ENCODE measurements at regions of chr3 and their contacts with region 1.

Region 1: GRCh38 chr3:126911162-126912026 is 71.5 kb upstream of the PLXNA1 start:
- DNase-seq: peak; percentile 99
- H3K4me3 ChIP-seq: no peak overlapping the region
- H3K27ac ChIP-seq: peak overlapping the region; percentile 78
- H3K4me1 ChIP-seq: peaks cover 48% of the 10 kb centered on the region
- H3K27me3 ChIP-seq: no peaks in the 10 kb centered on the region
- CTCF ChIP-seq: no peak

Region 2: GRCh38 chr3:126508539-126508938 is 402.9 kb before region 1 on chr3:
- CTCF ChIA-PET with region 1: no interaction called
- dilution Hi-C with region 1: loop called (anchors 10 kb)
- in situ Hi-C with region 1: no loop called
- intact Hi-C with region 1: no loop called
- DNase-seq: no peak
- H3K4me3 ChIP-seq: no peak overlapping the region
- H3K27ac ChIP-seq: no peak overlapping the region
- H3K4me1 ChIP-seq: peaks cover 18% of the 10 kb centered on the region
- H3K27me3 ChIP-seq: no peaks in the 10 kb centered on the region
- CTCF ChIP-seq: no peak

Region 3: GRCh38 chr3:126858887-126859286 is 52.5 kb before region 1 on chr3:
- CTCF ChIA-PET with region 1: no interaction called
- dilution Hi-C with region 1: no loop called
- in situ Hi-C with region 1: no loop called
- intact Hi-C with region 1: loop called (anchors 2 kb)
- DNase-seq: peak; percentile 97
- H3K4me3 ChIP-seq: no peak overlapping the region
- H3K27ac ChIP-seq: peak overlapping the region; percentile 36
- H3K4me1 ChIP-seq: peaks cover 20% of the 10 kb centered on the region
- H3K27me3 ChIP-seq: no peaks in the 10 kb centered on the region
- CTCF ChIP-seq: no peak

Region 4: DNA sequence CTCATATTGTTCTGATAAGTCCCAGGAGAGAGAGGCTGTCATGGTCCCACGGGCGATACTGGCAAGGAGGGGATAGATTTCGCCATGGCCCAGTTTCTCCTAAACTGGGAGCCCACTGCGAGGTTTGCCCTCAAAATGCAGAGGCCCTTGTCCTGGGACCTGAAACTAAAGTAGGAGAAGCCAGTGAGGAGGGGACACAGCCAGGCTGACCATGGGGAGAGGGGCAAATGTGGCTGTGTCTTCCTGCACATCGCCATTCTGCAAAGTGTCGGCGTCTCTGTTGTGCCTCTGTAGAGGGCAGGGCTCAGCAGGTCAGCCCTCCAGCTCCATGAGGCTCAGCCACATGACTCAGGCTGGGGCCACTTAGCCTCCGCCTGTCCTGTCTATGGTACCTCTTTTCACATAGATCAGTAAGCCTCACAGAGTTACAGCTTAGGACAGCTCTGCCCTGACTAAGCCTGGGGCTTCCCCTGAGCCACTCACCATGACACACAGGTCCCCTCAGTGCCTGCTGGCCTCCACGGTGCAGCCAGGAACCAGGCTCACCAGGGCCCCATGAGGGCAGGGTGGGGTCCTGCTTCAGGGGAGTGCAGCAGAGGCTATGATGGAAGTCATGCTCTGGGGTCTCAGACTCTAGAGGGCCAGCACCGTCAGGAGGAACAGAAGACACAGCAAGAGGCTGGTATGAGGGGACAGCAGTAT is 42.9 kb after region 1 on chr3:
- CTCF ChIA-PET with region 1: no interaction called
- dilution Hi-C with region 1: no loop called
- in situ Hi-C with region 1: no loop called
- intact Hi-C with region 1: no loop called
- DNase-seq: no peak
- H3K4me3 ChIP-seq: no peak overlapping the region
- H3K27ac ChIP-seq: no peak overlapping the region
- H3K4me1 ChIP-seq: peaks cover 12% of the 10 kb centered on the region
- H3K27me3 ChIP-seq: no peaks in the 10 kb centered on the region
- CTCF ChIP-seq: no peak

Measured in mammary epithelial cell (primary cell).